ENCODE measurements at regions of chr13 and their contacts with region 1.

Region 1: GRCh38 chr13:99656092-99656745 is 154.9 kb downstream of the TM9SF2 start:
- DNase-seq: peak; percentile 91
- ATAC-seq: peak; percentile 59
- H3K4me3 Mint-ChIP-seq: peak overlapping the region; percentile 63
- H3K27ac Mint-ChIP-seq: peak overlapping the region; percentile 93
- H3K4me1 Mint-ChIP-seq: peaks cover 46% of the 10 kb centered on the region
- H3K27me3 Mint-ChIP-seq: peaks cover 4% of the 10 kb centered on the region

Region 2: DNA sequence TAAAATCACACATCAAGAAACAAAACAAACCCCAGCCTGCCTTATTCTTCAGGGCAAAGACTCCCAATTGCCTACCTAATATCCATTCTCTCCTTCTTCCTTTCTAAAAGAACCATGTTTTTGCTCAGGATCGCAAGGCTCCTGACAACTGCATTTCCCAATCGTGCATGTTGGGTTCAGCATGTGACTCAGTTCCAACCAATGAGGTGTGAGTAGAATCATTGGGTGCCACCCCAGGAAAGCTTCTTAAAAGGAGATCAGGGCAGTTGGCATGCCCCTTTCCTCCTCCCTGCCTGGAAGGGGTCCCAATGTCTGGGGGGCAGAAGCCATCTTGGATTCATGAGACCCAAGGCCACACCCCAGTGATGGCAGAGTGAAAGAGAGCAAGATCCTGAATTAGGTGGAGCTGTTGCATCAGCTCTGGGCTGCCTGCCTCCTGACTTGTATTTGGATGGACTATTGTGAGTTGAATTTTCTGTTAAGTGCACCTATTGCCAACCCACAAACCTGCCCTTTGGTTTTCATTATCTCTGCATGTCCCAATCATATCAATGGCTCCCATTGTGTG is 481.6 kb before region 1 on chr13:
- CTCF ChIA-PET with region 1: no interaction called
- DNase-seq: no peak
- ATAC-seq: no peak
- H3K4me3 Mint-ChIP-seq: no peak overlapping the region
- H3K27ac Mint-ChIP-seq: no peak overlapping the region
- H3K4me1 Mint-ChIP-seq: peaks cover 25% of the 10 kb centered on the region
- H3K27me3 Mint-ChIP-seq: peaks cover 2% of the 10 kb centered on the region

Region 3: DNA sequence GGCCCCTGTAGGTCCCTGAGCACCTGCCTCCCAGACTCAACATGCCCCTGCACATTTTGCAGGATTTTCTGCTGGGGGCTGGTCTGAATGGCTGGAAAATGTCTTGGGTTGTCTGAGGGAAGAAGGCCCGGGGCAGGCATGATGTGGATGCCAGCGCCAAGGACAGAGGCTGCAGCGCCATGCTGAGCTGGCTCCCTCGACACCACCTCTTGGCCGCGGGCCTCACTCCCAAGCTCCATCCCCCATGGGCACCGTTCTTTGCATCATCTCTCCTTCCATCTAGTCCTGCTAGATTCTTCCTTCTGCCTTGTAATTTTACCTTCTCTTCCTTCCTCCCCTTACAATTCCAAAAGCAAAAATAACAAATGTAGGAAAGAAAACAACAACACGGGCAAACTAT is 244.7 kb after region 1 on chr13:
- CTCF ChIA-PET with region 1: interaction called, 12 read pairs
- DNase-seq: no peak
- ATAC-seq: peak; percentile 24
- H3K4me3 Mint-ChIP-seq: no peak overlapping the region
- H3K27ac Mint-ChIP-seq: no peak overlapping the region
- H3K4me1 Mint-ChIP-seq: peaks cover 13% of the 10 kb centered on the region
- H3K27me3 Mint-ChIP-seq: peaks cover 67% of the 10 kb centered on the region

Region 4: GRCh38 chr13:99916366-99917103 is 260.3 kb after region 1 on chr13:
- CTCF ChIA-PET with region 1: interaction called, 20 read pairs
- DNase-seq: no peak
- ATAC-seq: peak; percentile 63
- H3K4me3 Mint-ChIP-seq: no peak overlapping the region
- H3K27ac Mint-ChIP-seq: peak overlapping the region; percentile 26
- H3K4me1 Mint-ChIP-seq: peaks cover 40% of the 10 kb centered on the region
- H3K27me3 Mint-ChIP-seq: peaks cover 23% of the 10 kb centered on the region

Region 5: DNA sequence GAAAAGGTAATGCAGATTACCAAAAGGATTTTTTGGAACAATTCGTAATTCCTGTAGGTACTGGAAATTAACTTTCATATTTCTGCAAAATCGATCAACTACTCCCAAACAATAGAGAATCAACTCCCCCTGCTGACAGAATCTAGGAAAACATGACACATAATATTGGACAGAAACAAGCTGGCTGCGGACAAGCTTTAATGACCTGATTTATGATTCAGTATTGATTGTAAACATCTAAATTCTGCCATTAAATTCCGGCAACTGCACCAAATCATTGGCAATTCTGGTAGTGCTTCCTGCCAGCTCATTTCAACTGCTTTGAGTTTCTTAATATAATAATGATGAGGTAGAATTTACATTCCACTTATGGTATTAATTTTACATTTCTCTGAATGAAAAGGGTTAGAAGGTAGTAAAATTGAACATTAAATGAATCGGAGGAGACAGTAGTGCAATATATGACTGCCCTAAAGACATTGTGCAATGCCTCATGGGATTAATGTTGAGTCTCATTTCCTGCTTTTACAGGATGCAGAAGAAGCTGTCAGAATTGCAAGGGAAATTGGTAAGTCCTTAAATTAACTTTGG is 579.2 kb after region 1 on chr13:
- CTCF ChIA-PET with region 1: interaction called, 25 read pairs
- DNase-seq: no peak
- ATAC-seq: peak; percentile 27
- H3K4me3 Mint-ChIP-seq: no peak overlapping the region
- H3K27ac Mint-ChIP-seq: no peak overlapping the region
- H3K4me1 Mint-ChIP-seq: peaks cover 11% of the 10 kb centered on the region
- H3K27me3 Mint-ChIP-seq: no peaks in the 10 kb centered on the region

Measured in activated CD8-positive, alpha-beta memory T cell treated with anti-CD3 and anti-CD28 coated beads, Interleukin-2, amount 10 ng/mL, durations not matched to agents 7 days and 5 days (primary cell).